ENCODE measurements at regions of chr2 and their contacts with region 1.

Region 1: DNA sequence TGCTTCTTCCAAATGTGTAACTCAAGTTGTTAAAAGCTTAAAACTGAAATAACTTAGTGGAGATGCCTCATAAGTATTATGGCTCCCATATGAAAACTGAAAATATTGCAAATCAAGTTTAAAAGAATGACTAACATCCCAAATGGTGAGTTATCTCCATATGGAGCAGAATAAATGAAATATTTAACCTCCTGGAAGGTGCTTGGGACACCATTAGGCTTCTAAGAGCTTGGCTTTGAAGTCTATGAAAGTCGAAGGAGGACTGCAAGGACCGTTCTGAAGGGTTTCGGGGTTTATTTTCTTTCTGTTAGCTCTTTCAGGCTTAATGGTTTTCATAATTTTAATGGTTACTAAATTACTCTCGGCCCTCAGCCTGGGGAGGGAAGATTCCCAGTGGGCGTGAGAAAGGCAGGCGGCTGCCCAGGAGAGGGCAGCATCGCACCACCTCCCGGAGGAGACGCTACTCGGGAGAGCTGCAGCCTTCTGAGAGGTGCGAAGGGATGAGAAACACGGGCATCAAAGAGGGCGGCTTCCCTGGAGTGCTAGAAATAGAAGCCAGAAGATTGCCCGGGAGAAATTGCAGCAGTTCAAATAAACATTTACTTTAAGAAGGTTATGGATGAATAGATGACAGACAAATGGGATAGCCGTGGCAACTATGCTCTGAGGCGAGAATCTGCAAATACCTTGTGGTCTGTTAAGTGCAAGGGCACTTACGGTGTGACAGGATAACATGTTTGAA is 43.1 kb downstream of the MAP3K19 start:
- DNase-seq: peak; percentile 76
- H3K4me3 ChIP-seq: no peak overlapping the region
- H3K27ac ChIP-seq: no peak overlapping the region
- H3K4me1 ChIP-seq: no peaks in the 10 kb centered on the region
- CTCF ChIP-seq: peak; percentile 99

Region 2: GRCh38 chr2:134668821-134669220 is 335.4 kb before region 1 on chr2:
- CTCF ChIA-PET with region 1: no interaction called
- POLR2A ChIA-PET with region 1: no interaction called
- intact Hi-C with region 1: no loop called
- DNase-seq: no peak
- H3K4me3 ChIP-seq: no peak overlapping the region
- H3K27ac ChIP-seq: no peak overlapping the region
- H3K4me1 ChIP-seq: no peaks in the 10 kb centered on the region
- CTCF ChIP-seq: no peak

Region 3: DNA sequence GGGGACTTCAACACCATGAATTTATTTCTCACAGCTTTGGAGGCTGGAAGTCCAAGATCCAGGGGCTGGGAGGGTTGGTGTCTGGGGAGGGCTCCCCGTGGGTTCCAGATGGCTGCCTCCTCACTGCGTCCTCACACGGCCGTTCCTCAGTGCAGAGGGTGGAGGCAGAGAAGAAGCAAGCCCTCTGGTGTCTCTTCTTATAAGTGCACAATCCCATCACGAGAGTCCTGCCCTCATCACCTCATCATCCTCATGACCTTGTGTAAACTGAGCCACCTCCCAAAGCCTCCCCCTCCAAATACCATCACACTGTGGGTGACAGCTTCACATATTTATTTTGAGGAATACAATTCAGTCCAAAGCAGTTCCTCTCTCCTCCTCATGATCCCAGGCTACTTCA is 311.7 kb before region 1 on chr2:
- CTCF ChIA-PET with region 1: no interaction called
- POLR2A ChIA-PET with region 1: no interaction called
- intact Hi-C with region 1: no loop called
- DNase-seq: peak; percentile 37
- H3K4me3 ChIP-seq: no peak overlapping the region
- H3K27ac ChIP-seq: no peak overlapping the region
- H3K4me1 ChIP-seq: peaks cover 8% of the 10 kb centered on the region
- CTCF ChIP-seq: peak; percentile 51

Region 4: GRCh38 chr2:135258193-135258592 is 254.0 kb after region 1 on chr2:
- CTCF ChIA-PET with region 1: no interaction called
- POLR2A ChIA-PET with region 1: no interaction called
- intact Hi-C with region 1: loop called (anchors 2 kb)
- DNase-seq: peak; percentile 44
- H3K4me3 ChIP-seq: no peak overlapping the region
- H3K27ac ChIP-seq: no peak overlapping the region
- H3K4me1 ChIP-seq: peaks cover 41% of the 10 kb centered on the region
- CTCF ChIP-seq: peak; percentile 60

Region 5: GRCh38 chr2:135473567-135473966 is 469.4 kb after region 1 on chr2:
- CTCF ChIA-PET with region 1: no interaction called
- POLR2A ChIA-PET with region 1: no interaction called
- intact Hi-C with region 1: loop called (anchors 5 kb)
- DNase-seq: peak; percentile 55
- H3K4me3 ChIP-seq: no peak overlapping the region
- H3K27ac ChIP-seq: no peak overlapping the region
- H3K4me1 ChIP-seq: no peaks in the 10 kb centered on the region
- CTCF ChIP-seq: peak; percentile 87

Region 6: GRCh38 chr2:135531231-135532228 is 527.4 kb after region 1 on chr2 and contains the start of gene R3HDM1:
- CTCF ChIA-PET with region 1: no interaction called
- POLR2A ChIA-PET with region 1: no interaction called
- intact Hi-C with region 1: loop called (anchors 10 kb)
- DNase-seq: peak; percentile 100
- H3K4me3 ChIP-seq: peak within 1 kb of the TSS; percentile 87
- H3K27ac ChIP-seq: peak within 1 kb of the TSS; percentile 85
- H3K4me1 ChIP-seq: peaks cover 41% of the 10 kb centered on the region
- CTCF ChIP-seq: peak; percentile 53
- total RNA-seq, gene R3HDM1: 28.7 and 67.5 TPM in 2 replicates

Region 7: DNA sequence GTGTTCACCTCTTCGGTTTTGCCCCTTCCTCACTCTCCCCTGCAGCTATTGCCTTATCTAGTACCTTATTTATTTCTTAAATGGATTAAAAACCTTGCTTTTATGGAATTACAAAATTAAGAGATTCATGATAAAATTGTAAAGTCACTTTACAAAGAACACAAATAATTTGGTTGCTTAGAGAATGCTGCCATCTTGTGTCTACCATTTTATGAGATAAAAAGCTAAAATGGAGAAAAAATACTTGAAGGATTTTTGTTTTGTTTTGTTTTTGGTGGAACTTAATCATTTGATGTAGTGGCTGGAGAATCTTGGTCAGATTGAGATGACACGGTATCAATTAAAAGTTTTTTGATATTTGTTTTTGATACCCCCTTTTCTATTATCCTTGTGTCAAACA is 596.7 kb after region 1 on chr2:
- CTCF ChIA-PET with region 1: no interaction called
- POLR2A ChIA-PET with region 1: no interaction called
- intact Hi-C with region 1: loop called (anchors 10 kb)
- DNase-seq: peak; percentile 12
- H3K4me3 ChIP-seq: no peak overlapping the region
- H3K27ac ChIP-seq: no peak overlapping the region
- H3K4me1 ChIP-seq: no peaks in the 10 kb centered on the region
- CTCF ChIP-seq: peak; percentile 54

Region 8: GRCh38 chr2:135709992-135710391 is 705.8 kb after region 1 on chr2:
- CTCF ChIA-PET with region 1: interaction called, 3 read pairs
- POLR2A ChIA-PET with region 1: no interaction called
- intact Hi-C with region 1: loop called (anchors 2 kb)
- DNase-seq: peak; percentile 61
- H3K4me3 ChIP-seq: no peak overlapping the region
- H3K27ac ChIP-seq: no peak overlapping the region
- H3K4me1 ChIP-seq: no peaks in the 10 kb centered on the region
- CTCF ChIP-seq: peak; percentile 99

Region 9: DNA sequence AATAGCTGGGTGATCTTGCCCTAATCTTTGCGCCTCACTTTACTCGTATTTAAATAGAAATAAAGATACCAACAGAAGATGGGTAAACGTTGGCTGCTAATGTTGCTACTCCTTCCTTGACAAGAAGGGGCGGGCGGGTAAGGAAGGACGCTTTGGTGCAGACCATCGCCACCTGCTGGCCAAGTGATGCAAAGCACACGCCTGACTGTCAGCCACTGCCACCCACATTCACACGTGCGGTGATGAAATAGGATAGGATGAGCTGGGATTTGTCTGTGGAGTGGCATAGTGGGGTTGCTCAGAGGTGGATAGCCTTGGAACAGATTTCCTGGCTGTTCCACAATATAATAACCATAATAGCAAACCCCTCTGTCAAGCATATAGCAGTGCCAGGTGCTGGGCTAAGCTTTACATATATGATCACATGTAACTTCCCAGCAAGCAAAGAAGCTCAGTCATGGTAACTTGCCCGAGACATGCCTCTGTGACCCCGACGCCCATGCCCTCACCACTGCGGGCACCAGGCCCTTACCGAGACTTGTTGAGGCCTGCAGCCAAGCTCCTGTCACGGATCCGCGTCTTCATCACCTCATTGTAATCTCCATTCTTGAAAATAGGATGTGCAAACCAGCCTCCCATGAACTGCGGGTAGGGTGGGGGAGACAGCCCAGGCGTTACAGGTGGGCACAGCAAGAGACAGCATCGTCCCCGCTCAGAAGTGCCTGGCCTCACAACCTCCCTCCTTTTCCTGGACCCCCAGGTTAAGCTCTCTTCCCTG is 793.5 kb after region 1 on chr2:
- CTCF ChIA-PET with region 1: no interaction called
- POLR2A ChIA-PET with region 1: no interaction called
- intact Hi-C with region 1: loop called (anchors 1 kb)
- DNase-seq: peak; percentile 83
- H3K4me3 ChIP-seq: no peak overlapping the region
- H3K27ac ChIP-seq: no peak overlapping the region
- H3K4me1 ChIP-seq: peaks cover 9% of the 10 kb centered on the region
- CTCF ChIP-seq: peak; percentile 95

Measured in OCI-LY7 (cell line).